ENCODE measurements at regions of chr14 and their contacts with region 1.

Region 1: DNA sequence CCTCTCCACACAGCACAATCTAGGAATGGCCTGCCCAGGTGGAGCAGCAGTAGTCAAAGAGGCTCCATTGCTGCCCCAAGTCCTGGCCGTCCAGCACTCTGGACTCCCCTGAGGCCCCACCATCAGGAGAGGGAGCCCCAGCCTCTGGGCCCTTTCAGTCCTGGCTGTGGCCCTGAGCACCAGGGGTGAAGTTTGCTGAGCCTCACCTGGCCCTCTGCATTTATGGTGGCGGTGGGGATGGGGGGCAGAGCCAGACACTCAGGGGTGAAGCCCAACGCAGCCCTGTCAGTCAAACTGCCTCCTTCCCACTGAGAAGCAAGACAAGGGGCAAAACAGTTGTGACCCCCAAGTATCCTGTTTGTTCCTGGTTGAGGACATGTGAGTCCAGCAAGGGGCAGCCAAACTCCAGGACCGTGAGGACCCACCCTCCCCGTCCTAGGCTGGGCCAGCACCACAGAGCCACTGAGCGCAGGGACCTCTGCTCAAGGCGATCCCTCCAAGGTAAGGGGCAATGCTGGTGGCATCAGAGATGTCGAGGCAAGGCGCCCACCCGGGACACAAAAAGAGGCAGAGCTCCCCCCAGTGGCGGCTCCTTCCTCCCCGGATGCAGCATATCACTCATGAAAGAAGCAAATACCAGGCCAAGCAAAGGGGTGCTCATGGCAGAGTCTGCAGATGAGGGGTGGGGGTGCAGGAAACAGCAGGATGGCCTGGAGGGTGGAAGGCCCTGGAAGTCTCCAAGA is 4.8 kb upstream of the AMN start:
- DNase-seq: peak; percentile 62 to 71
- H3K4me3 ChIP-seq: no peak overlapping the region
- H3K27ac ChIP-seq: no peak overlapping the region
- H3K4me1 ChIP-seq: peaks cover 0 to 4% (median 3%) of the 10 kb centered on the region in 4 donors
- H3K27me3 ChIP-seq: peaks cover 0 to 10% (median 3%) of the 10 kb centered on the region in 3 donors
- CTCF ChIP-seq: peak in 4 of 7 experiments; percentile 45 to 59 (median 47)
- EP300 ChIP-seq: no peak
- POLR2A ChIP-seq: no peak

Region 2: DNA sequence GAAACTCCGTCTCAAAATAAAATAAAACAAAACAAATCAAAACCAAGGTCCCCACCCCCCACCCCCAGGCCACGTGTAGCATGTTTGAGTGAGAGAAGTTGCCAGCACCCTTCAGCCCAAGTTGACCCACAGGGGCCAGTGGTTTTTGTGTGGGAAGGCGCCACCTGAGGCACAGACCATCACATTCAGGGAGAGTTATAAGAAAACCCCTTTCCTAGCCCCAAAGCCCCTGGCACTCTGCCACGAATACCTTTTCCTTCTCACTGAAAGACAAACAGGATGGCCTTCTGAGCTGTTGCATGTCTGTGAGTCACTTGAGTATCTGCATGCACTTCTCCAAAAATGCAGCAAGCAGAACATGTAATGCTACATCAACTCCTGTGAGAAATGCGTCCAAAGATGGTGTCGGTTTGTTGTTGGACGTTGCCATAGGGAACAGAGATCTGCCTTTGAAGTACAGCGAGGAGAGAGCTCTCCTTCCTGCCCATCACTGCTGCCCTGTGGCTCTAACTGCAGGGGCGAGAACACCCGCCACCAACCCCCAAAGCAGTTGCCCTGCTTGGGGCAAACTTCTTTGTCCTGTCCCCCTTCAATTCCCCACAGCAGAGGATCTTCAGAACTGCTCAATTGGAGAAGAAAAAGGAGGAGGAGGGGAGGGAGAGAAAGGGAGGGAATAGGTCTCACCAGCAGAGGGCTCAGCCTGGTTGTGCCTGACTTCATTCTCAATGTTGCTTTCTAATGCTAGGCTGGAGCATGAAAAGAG is 143.1 kb before region 1 on chr14:
- intact Hi-C with region 1: loop called (anchors 10 kb)
- DNase-seq: peak; percentile 57 to 90
- H3K4me3 ChIP-seq: no peak overlapping the region
- H3K27ac ChIP-seq: peak overlapping the region in 3 of 5 donors; percentile 39 to 84 (median 83)
- H3K4me1 ChIP-seq: peaks cover 0 to 32% (median 17%) of the 10 kb centered on the region in 4 donors
- H3K27me3 ChIP-seq: no peaks in the 10 kb centered on the region
- CTCF ChIP-seq: peak in 5 of 7 experiments; percentile 54 to 72 (median 68)
- EP300 ChIP-seq: no peak
- POLR2A ChIP-seq: no peak